ENCODE measurements at regions of chr4 and their contacts with region 1.

Region 1: DNA sequence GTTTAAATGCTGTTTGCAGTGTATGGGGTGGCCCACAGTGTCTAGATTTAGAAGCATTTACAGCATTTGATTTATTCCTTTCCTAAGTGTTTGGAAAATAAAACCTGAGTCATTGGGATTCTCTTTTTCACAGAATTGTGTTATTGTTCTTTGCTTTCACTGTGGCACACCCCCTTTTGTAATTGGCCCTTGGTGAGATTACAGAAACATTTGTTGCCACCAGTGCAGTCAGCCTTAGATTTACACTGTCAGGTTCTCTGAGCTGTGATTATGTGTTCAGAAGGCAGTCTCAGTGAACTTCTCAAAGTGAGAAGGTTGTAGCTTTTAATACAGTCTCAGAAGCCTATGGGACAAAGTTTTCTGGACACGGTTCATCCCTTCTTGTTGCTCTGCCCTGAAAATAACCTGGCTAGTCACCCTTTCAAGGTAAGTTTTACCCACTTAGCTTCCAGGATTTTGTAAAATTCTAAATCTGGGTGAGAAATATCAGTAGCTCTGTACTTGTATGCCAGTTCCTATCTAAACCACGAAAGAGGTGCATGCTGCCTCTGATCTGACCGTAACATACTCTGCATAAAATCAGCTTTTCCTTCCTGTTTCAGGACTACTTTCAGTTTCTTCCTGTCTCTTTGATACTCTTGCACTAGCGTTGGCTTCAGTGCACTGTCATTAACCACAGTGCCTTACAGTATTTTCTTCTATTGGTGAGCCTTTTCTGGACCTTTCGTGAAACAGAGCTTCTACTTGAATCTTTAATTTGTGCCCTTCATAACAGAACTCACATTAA is 12.6 kb downstream of the RUFY3 start:
- DNase-seq: peak; percentile 81
- ATAC-seq: peak; percentile 95
- H3K4me3 ChIP-seq: peak overlapping the region; percentile 5 to 74 (median 37)
- H3K4me3 Mint-ChIP-seq: peak overlapping the region; percentile 73
- H3K27ac ChIP-seq: peak overlapping the region; percentile 70 to 74
- H3K27ac Mint-ChIP-seq: peak overlapping the region; percentile 92
- H3K4me1 ChIP-seq: peaks cover 44 to 45% of the 10 kb centered on the region in 2 donors
- H3K4me1 Mint-ChIP-seq: peaks cover 44% of the 10 kb centered on the region
- H3K27me3 ChIP-seq: no peaks in the 10 kb centered on the region
- H3K27me3 Mint-ChIP-seq: no peaks in the 10 kb centered on the region
- CTCF ChIP-seq: no peak

Region 2: GRCh38 chr4:70687821-70688794 is 46.3 kb before region 1 on chr4 and contains the start of gene UTP3:
- CTCF ChIA-PET with region 1: interaction called, 21 read pairs
- POLR2A ChIA-PET with region 1: interaction called, 7 read pairs
- intact Hi-C with region 1: loop called (anchors 1 kb)
- DNase-seq: peak; percentile 96
- ATAC-seq: peak; percentile 90
- H3K4me3 ChIP-seq: peak within 1 kb of the TSS; percentile 66 to 97 (median 92)
- H3K4me3 Mint-ChIP-seq: peak within 1 kb of the TSS; percentile 100
- H3K27ac ChIP-seq: peak within 1 kb of the TSS; percentile 96 to 98
- H3K27ac Mint-ChIP-seq: peak within 1 kb of the TSS; percentile 100
- H3K4me1 ChIP-seq: peaks cover 24 to 32% of the 10 kb centered on the region in 2 donors
- H3K4me1 Mint-ChIP-seq: peaks cover 37% of the 10 kb centered on the region
- H3K27me3 ChIP-seq: no peaks in the 10 kb centered on the region
- H3K27me3 Mint-ChIP-seq: no peaks in the 10 kb centered on the region
- CTCF ChIP-seq: peak; percentile 98
- total RNA-seq, gene UTP3: 42.0 and 42.2 TPM in 2 replicates

Region 3: DNA sequence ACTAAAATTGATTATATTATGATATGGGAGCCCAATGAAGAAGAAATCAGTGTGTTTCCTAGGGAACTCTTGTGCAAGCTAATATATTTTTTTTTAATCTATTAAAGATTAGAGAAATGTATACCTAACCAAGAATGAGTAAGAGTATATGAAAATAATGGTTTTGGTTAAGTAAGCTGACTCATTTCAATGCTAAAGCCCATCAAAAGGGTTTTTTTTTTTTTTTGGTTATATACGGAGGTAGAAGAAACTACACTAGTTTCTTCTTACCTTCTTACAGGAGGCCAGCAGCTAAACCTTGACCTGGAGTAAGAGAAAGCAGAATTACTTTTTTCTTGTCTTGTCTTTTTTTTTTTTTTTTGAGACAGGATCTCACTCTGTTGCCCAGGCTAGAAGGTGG is 15.0 kb after region 1 on chr4:
- CTCF ChIA-PET with region 1: interaction called, 34 read pairs
- POLR2A ChIA-PET with region 1: no interaction called
- intact Hi-C with region 1: loop called (anchors 1 kb)
- DNase-seq: no peak
- ATAC-seq: no peak
- H3K4me3 ChIP-seq: no peak overlapping the region
- H3K4me3 Mint-ChIP-seq: no peak overlapping the region
- H3K27ac ChIP-seq: no peak overlapping the region
- H3K27ac Mint-ChIP-seq: no peak overlapping the region
- H3K4me1 ChIP-seq: peaks cover 17 to 20% of the 10 kb centered on the region in 2 donors
- H3K4me1 Mint-ChIP-seq: peaks cover 27% of the 10 kb centered on the region
- H3K27me3 ChIP-seq: no peaks in the 10 kb centered on the region
- H3K27me3 Mint-ChIP-seq: no peaks in the 10 kb centered on the region
- CTCF ChIP-seq: no peak

Region 4: DNA sequence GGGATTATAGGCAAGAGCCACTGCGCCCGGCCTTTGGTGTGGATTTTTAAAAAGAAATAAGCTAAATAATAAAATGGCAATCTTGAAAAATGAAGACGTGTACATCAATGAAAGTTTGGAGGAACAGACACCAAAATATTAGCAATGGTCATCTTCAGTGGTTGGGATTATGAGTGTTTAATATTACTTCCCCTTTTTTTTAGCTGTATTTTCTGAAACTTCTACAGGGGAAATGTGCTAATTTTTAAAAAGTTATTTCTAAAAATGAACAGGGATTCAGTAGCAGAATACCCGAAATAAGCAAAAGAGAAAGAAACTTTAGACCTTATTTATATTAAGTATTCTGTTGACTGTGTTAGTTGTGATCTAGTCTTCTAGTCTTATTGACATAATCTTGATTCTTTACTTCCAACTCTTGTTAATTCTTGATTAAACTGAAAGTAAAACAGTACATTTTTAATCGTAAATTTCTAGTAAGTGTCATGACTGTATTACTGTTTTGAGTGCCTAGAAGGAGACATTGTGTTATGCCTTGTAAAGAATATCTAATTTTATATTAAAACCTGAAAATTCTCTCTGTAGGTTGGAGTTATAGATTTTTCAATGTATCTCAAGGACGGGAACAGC is 38.7 kb after region 1 on chr4:
- CTCF ChIA-PET with region 1: interaction called, 12 read pairs
- POLR2A ChIA-PET with region 1: no interaction called
- intact Hi-C with region 1: loop called (anchors 5 kb)
- DNase-seq: peak; percentile 9
- ATAC-seq: no peak
- H3K4me3 ChIP-seq: no peak overlapping the region
- H3K4me3 Mint-ChIP-seq: no peak overlapping the region
- H3K27ac ChIP-seq: no peak overlapping the region
- H3K27ac Mint-ChIP-seq: no peak overlapping the region
- H3K4me1 ChIP-seq: no peaks in the 10 kb centered on the region
- H3K4me1 Mint-ChIP-seq: peaks cover 4% of the 10 kb centered on the region
- H3K27me3 ChIP-seq: no peaks in the 10 kb centered on the region
- H3K27me3 Mint-ChIP-seq: no peaks in the 10 kb centered on the region
- CTCF ChIP-seq: no peak

Region 5: DNA sequence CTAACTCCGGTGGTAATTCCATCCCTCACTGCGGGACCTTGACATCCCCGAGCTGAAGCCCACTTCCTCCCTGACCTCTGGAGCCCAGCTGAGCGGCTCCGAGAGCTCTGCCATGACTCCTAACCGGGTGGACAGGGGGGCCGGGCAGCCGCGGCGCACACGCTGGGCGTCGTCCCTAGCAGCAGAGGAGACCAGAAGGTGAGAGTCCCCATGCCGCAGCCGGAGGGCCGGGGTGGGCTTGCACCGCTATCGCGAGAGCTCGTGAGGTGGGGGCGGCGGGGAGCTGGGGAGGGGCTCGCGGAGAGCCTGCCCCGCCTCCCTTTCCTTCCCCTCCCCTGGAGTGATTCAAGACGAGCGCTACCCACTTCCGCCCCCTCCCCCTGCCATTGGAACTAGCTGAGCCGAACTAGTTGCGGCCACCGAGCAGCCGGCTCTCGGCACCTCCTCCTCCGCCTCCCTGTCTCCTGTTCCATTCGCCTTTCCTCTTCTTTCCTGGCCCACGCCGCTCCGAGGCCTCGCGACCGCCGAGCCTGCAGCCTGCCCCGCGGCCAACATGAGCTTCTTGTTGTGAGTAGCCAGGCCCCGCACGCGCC is 167.7 kb after region 1 on chr4 and contains the start of gene MOB1B:
- CTCF ChIA-PET with region 1: interaction called, 18 read pairs
- POLR2A ChIA-PET with region 1: no interaction called
- intact Hi-C with region 1: loop called (anchors 10 kb)
- DNase-seq: peak; percentile 85
- ATAC-seq: peak; percentile 95
- H3K4me3 ChIP-seq: peak within 1 kb of the TSS; percentile 72 to 98 (median 77)
- H3K4me3 Mint-ChIP-seq: peak within 1 kb of the TSS; percentile 99
- H3K27ac ChIP-seq: peak within 1 kb of the TSS; percentile 41 to 76
- H3K27ac Mint-ChIP-seq: peak within 1 kb of the TSS; percentile 89
- H3K4me1 ChIP-seq: peaks cover 13% of the 10 kb centered on the region in 2 donors
- H3K4me1 Mint-ChIP-seq: peaks cover 29% of the 10 kb centered on the region
- H3K27me3 ChIP-seq: no peaks in the 10 kb centered on the region
- H3K27me3 Mint-ChIP-seq: no peaks in the 10 kb centered on the region
- CTCF ChIP-seq: peak; percentile 61
- total RNA-seq, gene MOB1B: 30.4 and 32.4 TPM in 2 replicates